IMR-90 (cell line): ENCODE measurements at regions of chr7 and their contacts with region 1.

Region 1: GRCh38 chr7:127708788-127709187 is 56.8 kb downstream of the SND1 start:
- DNase-seq: peak; percentile 86
- ATAC-seq: peak; percentile 64
- H3K4me3 ChIP-seq: no peak overlapping the region
- H3K27ac ChIP-seq: no peak overlapping the region
- H3K4me1 ChIP-seq: peaks cover 6% of the 10 kb centered on the region
- H3K27me3 ChIP-seq: no peaks in the 10 kb centered on the region
- CTCF ChIP-seq: peak; percentile 75
- POLR2A ChIP-seq: no peak
- RAD21 ChIP-seq: peak; percentile 88

Region 2: DNA sequence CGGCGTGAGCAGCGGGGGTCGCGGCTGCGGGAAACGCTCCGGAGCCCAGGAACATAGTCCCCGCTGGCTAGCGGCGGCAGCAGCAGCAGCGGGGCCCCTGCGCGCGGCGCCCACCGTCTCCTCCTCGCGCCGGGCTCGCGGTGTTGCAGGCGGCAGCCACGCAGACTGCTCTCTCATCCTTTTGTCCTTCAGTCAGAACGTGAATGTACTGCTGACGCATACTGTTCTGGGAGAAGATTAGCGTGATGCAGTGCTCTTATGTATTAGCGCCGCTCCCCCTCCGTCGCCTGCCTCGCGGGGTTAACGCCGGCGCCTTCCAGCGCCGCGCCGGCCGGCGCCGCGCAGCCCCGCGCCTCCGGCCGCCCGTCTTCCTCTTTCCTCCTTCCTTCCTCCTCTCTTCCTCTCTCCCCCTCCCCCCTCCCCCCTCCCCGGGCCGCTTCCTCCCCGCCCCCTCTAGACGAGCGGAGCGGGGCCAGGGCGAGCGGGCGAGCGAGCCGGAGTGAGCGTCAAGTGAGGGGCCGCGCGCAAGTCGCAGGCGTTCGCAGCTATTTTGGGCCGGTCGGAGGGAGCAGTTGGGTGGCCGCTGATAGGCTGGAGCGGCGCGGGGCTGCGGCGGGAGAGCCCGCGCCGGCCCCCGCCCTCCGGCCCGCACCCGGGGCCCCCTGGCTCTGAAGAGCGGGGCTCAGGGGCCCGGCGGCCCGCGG is 323.3 kb after region 1 on chr7:
- CTCF ChIA-PET with region 1: interaction called, 3 read pairs
- POLR2A ChIA-PET with region 1: no interaction called
- dilution Hi-C with region 1: no loop called
- in situ Hi-C with region 1: no loop called
- intact Hi-C with region 1: loop called (anchors 5 kb)
- DNase-seq: peak; percentile 96
- ATAC-seq: peak; percentile 84
- H3K4me3 ChIP-seq: peak overlapping the region; percentile 64
- H3K27ac ChIP-seq: no peak overlapping the region; the same call in 1 of the 2 replicates
- H3K4me1 ChIP-seq: peaks cover 7% of the 10 kb centered on the region; the same call in 1 of the 2 replicates
- H3K27me3 ChIP-seq: no peaks in the 10 kb centered on the region
- CTCF ChIP-seq: peak; percentile 49
- POLR2A ChIP-seq: peak; percentile 54; the same call in 1 of the 2 replicates
- RAD21 ChIP-seq: peak; percentile 59

Region 3: GRCh38 chr7:128053023-128053422 is 344.2 kb after region 1 on chr7:
- CTCF ChIA-PET with region 1: no interaction called
- POLR2A ChIA-PET with region 1: no interaction called
- dilution Hi-C with region 1: no loop called
- in situ Hi-C with region 1: loop called (anchors 25 kb)
- intact Hi-C with region 1: no loop called
- DNase-seq: peak; percentile 49
- ATAC-seq: no peak
- H3K4me3 ChIP-seq: no peak overlapping the region
- H3K27ac ChIP-seq: no peak overlapping the region
- H3K4me1 ChIP-seq: peaks cover 19% of the 10 kb centered on the region
- H3K27me3 ChIP-seq: no peaks in the 10 kb centered on the region
- CTCF ChIP-seq: no peak
- POLR2A ChIP-seq: no peak
- RAD21 ChIP-seq: no peak

Region 4: DNA sequence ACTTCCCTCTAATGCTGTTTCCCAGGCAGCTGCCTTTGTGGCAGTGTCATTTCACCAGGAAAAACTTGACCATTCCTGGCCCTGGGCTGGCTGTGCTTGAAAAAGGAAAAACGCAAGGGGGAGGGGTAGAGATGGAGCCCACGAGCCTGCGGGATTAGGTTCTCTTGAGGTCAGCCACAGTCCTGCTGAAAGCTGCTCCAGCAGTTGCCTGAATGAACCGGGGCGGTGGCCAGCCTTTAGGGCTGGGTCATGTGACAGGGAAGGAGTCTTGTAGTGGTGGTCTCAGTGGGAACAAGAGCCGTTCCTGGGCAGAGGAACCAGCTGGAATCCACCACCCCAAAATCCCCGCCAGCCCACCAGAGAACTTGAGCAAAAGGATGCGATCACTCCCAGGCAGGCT is 373.6 kb after region 1 on chr7:
- CTCF ChIA-PET with region 1: no interaction called
- POLR2A ChIA-PET with region 1: no interaction called
- dilution Hi-C with region 1: no loop called
- in situ Hi-C with region 1: no loop called
- intact Hi-C with region 1: no loop called
- DNase-seq: no peak
- ATAC-seq: no peak
- H3K4me3 ChIP-seq: no peak overlapping the region
- H3K27ac ChIP-seq: no peak overlapping the region
- H3K4me1 ChIP-seq: peaks cover 9% of the 10 kb centered on the region
- H3K27me3 ChIP-seq: no peaks in the 10 kb centered on the region
- CTCF ChIP-seq: no peak
- POLR2A ChIP-seq: no peak
- RAD21 ChIP-seq: no peak

Region 5: DNA sequence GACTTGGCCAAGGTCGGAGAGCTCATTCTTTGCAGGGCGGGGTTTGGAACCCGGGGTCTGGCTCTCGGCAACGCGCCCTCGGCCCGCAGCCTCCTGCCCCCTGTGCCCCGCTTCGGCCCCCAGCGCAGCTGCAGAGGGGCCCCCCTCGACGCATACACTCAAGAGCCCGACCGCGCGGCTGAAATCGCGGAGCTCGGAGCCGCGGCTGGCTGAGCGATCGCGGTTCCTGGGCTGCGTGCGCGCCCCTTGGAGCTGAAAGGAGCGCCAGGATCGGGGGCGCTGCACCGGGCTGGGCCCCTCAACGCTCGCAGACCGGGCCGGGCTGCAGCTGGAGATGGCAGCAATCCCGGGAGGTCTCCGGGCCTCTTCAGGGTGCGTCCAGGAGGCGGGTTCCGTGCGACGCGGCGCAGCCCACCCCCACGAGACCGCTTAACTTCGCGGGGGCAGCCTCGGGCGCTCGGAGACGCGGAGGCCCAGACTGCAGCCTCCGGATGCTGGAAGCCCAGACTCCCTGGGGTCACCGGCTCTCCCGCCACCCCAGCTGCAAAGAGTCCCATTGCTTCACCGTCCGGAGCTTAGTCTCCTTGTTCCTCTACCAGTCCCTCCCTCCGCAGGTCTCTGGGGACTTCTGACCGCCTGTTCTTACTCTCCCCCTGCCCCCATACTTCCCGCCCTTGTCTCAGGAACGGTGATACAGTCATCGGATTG is 395.4 kb after region 1 on chr7:
- CTCF ChIA-PET with region 1: no interaction called
- POLR2A ChIA-PET with region 1: no interaction called
- dilution Hi-C with region 1: no loop called
- in situ Hi-C with region 1: no loop called
- intact Hi-C with region 1: loop called (anchors 5 kb)
- DNase-seq: no peak
- ATAC-seq: peak; percentile 50
- H3K4me3 ChIP-seq: peak overlapping the region; percentile 34
- H3K27ac ChIP-seq: no peak overlapping the region
- H3K4me1 ChIP-seq: peaks cover 2% of the 10 kb centered on the region; the same call in 1 of the 2 replicates
- H3K27me3 ChIP-seq: peaks cover 45% of the 10 kb centered on the region
- CTCF ChIP-seq: no peak
- POLR2A ChIP-seq: no peak
- RAD21 ChIP-seq: no peak

Region 6: GRCh38 chr7:128322040-128322643 is 613.4 kb after region 1 on chr7:
- CTCF ChIA-PET with region 1: no interaction called
- POLR2A ChIA-PET with region 1: no interaction called
- dilution Hi-C with region 1: no loop called
- in situ Hi-C with region 1: no loop called
- intact Hi-C with region 1: loop called (anchors 5 kb)
- DNase-seq: peak; percentile 54
- ATAC-seq: peak; percentile 79
- H3K4me3 ChIP-seq: no peak overlapping the region
- H3K27ac ChIP-seq: no peak overlapping the region
- H3K4me1 ChIP-seq: no peaks in the 10 kb centered on the region; the same call in 1 of the 2 replicates
- H3K27me3 ChIP-seq: no peaks in the 10 kb centered on the region
- CTCF ChIP-seq: peak; percentile 56
- POLR2A ChIP-seq: no peak
- RAD21 ChIP-seq: peak; percentile 52